ENCODE measurements at regions of chr2 and their contacts with region 1.

Region 1: DNA sequence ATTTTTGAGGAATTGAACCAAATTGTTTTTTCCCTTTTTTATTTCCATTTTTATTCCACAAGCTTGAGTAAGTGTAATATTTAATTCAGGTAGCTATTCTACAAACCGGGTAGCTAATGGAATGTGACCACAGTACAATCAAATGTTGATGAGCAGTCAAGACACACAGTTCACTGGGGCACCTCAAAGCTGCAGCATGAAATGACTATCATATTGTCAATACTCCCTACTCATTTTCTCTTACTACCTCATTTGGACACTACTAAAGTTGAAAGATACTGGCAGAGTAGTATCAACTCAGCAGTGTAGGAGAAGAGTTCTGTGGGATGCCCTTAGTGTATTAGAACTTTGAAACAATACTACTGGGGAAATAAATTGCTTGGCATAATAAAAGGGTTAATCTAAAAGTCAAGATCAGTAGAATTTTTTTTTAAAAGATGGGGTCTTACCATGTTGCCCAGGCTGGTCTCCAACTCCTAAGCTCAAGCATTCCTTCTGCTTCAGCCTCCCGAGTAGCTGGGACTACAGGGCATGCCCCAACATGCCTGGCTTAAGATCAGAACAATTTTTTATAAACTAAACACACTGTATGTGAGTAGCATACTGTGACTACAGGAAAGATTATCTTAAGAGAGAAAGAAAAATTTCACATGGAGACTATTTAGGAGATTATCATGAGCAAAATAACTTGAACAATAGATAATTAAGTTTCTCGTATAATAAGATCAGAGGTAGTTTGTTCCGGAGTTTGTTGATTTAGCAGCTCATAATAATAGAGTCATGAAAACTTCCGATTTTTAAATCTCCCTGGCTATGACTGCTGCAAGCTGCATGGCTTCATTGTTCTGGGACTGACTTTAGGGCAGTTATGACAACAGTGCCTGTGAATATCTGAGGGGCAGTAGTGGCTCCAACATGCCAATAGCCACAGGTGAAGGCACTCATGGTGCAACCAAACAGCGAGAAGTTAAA is 43.7 kb downstream of the MYO3B start:
- DNase-seq: peak; percentile 80
- H3K4me3 ChIP-seq: peak overlapping the region; percentile 16
- H3K27ac ChIP-seq: peak overlapping the region; percentile 74
- H3K4me1 ChIP-seq: peaks cover 28% of the 10 kb centered on the region
- H3K27me3 ChIP-seq: no peaks in the 10 kb centered on the region
- CTCF ChIP-seq: no peak

Region 2: GRCh38 chr2:169964740-169965139 is 256.9 kb before region 1 on chr2:
- CTCF ChIA-PET with region 1: no interaction called
- POLR2A ChIA-PET with region 1: interaction called, 11 read pairs
- intact Hi-C with region 1: no loop called
- DNase-seq: no peak
- H3K4me3 ChIP-seq: no peak overlapping the region
- H3K27ac ChIP-seq: no peak overlapping the region
- H3K4me1 ChIP-seq: no peaks in the 10 kb centered on the region
- H3K27me3 ChIP-seq: no peaks in the 10 kb centered on the region
- CTCF ChIP-seq: no peak

Region 3: DNA sequence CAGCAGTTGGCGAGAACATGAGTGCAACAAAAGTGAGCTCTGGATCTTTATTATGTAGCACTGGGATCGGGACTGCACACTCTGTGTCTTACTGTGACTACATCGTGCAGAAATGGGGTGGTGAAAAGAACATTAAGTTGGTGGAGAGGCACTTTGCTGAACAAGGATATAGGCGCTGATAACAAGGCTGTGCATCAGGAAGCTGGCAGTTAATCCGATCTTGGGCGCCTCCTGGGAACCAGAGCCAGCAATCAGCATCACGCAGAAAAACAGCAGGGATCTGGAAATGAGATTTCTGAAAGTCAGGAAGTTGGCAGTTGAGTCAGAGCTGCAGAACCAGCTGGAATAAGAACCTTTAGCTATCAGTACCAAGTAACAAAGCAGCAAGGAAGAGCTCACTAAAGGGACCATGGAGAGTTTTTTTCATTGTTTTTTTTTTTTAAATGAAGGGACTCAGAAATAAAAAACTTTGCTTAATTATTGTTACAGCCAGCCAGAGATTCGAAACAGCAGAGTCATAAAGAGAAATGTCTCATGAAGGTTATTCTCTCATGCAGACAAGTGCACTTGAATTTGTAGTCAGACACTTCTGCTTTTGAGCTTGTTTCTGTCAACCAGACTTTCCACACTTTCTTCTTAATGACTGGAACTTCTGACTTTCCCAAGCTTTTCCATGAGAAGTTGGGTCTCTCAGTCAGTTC is 66.4 kb before region 1 on chr2:
- CTCF ChIA-PET with region 1: interaction called, 5 read pairs
- POLR2A ChIA-PET with region 1: no interaction called
- intact Hi-C with region 1: loop called (anchors 2 kb)
- DNase-seq: peak; percentile 98
- H3K4me3 ChIP-seq: peak overlapping the region; percentile 23
- H3K27ac ChIP-seq: peak overlapping the region; percentile 90
- H3K4me1 ChIP-seq: peaks cover 34% of the 10 kb centered on the region
- H3K27me3 ChIP-seq: no peaks in the 10 kb centered on the region
- CTCF ChIP-seq: peak; percentile 25; the same call in 1 of the 2 replicates

Region 4: DNA sequence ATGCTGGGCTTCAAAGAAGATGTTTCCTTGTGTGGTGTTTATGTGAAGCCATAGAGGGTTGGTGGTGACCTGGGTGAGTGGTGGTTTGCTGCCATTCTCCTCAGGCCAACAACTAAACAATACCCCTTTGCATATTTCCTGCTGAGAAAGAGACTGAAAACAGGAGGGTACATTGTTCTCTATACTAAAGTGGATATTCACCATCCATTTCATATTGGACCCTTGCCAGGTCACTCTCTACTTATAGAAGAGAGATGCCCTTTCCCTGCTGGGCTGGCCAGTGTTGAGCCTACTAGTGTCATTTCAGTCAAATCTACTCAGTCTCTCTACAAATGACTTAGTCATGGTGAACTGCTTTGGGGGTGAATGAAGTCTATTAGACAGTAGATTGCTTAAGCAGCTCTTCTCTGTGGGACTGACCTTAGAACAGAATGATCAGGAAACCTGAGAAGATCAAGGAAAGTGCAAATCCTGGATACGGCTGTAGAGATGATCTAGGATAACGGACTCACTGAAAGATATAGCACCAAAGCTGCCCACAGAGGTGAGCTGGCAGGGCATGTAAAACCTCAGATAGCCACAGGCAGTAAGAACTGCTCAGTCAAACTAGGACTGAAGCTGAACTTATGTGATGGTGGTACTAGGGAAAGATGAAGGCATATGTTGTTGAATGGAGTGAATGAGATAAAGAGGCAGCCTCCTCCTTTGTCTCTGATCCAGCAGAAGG is 111.2 kb after region 1 on chr2:
- CTCF ChIA-PET with region 1: no interaction called
- POLR2A ChIA-PET with region 1: no interaction called
- intact Hi-C with region 1: no loop called
- DNase-seq: no peak
- H3K4me3 ChIP-seq: no peak overlapping the region
- H3K27ac ChIP-seq: no peak overlapping the region
- H3K4me1 ChIP-seq: no peaks in the 10 kb centered on the region
- H3K27me3 ChIP-seq: no peaks in the 10 kb centered on the region
- CTCF ChIP-seq: no peak

Measured in A673 (cell line).